ENCODE measurements at regions of chr10 and their contacts with region 1.

Region 1: GRCh38 chr10:32346134-32346550 is 816 bp downstream of the EPC1 start:
- DNase-seq: peak; percentile 91 to 98 (median 94)
- ATAC-seq: peak; percentile 81
- H3K4me3 ChIP-seq: peak overlapping the region; percentile 82 to 90
- H3K4me3 Mint-ChIP-seq: peak overlapping the region; percentile 97
- H3K27ac ChIP-seq: peak overlapping the region; percentile 98
- H3K27ac Mint-ChIP-seq: peak overlapping the region; percentile 100
- H3K4me1 ChIP-seq: peaks cover 47% of the 10 kb centered on the region
- H3K4me1 Mint-ChIP-seq: peaks cover 69% of the 10 kb centered on the region
- H3K27me3 ChIP-seq: no peaks in the 10 kb centered on the region
- H3K27me3 Mint-ChIP-seq: no peaks in the 10 kb centered on the region
- CTCF ChIP-seq: peak; percentile 83

Region 2: DNA sequence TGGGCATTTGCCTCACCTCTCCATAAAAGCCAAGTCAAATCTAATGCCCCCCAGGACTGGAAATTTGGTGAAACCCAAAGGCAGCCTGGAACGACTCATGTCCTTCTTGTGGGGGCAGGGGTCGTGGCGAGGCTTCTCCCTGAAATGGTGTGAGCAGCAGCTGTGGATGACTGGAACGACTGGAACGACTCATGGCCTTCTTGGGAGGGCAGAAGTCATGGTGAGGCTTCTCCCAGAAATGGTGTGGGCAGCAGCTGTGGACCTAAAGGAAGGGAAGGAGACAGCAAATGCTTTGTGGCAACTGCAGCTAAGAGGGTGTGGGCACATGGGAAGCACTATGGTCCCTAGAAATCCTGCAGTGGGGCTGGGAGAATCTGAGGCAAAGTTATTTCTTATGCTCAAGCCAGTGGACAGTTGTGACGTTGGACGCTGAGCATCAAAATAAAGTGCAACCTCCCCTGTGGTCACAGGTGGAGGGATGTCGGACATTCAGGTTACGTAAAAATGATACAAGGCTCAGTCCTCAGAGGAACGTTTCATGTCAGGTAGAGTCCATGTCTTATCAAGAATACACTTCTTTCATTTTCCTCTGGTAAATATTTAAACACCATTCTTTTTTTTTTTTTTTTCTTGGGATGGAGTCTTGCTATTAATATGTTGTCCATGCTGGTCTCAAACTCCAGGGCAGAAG is 182.9 kb before region 1 on chr10:
- CTCF ChIA-PET with region 1: no interaction called
- POLR2A ChIA-PET with region 1: no interaction called
- intact Hi-C with region 1: no loop called
- DNase-seq: no peak
- ATAC-seq: no peak
- H3K4me3 ChIP-seq: no peak overlapping the region
- H3K4me3 Mint-ChIP-seq: no peak overlapping the region
- H3K27ac ChIP-seq: no peak overlapping the region
- H3K27ac Mint-ChIP-seq: no peak overlapping the region
- H3K4me1 ChIP-seq: no peaks in the 10 kb centered on the region
- H3K4me1 Mint-ChIP-seq: no peaks in the 10 kb centered on the region
- H3K27me3 ChIP-seq: no peaks in the 10 kb centered on the region
- H3K27me3 Mint-ChIP-seq: peaks cover 2% of the 10 kb centered on the region
- CTCF ChIP-seq: no peak

Region 3: DNA sequence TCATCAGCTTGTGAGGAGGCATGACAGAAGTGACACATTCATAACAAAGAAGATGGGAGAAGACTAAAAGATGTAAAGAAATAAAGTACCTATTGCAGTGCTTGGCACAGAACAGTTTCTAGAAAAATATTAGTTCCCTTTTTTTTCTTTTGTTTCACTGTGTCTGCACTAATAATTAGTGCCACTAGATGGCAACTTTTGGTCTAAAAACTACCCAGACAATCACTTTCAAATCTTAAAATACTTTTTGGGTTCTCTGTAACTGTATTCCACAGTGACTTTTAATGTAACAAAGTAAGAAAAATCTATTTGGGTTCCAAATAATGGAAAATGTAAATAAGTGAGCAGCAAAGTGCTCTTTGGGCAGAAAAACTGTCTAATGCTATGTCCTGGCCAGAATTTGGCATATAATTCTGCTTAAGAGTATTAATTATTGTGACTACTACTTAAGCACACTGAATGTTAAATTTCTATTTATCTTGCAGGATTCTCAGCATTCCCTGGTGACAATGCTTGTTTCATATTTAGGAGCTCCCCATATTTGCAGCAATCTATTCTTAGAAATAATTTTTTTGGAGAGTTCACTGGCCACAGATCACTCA is 155.2 kb before region 1 on chr10:
- CTCF ChIA-PET with region 1: interaction called, 6 read pairs
- POLR2A ChIA-PET with region 1: interaction called, 3 read pairs
- intact Hi-C with region 1: loop called (anchors 1 to 5 kb)
- DNase-seq: peak in 2 of 9 experiments; percentile 52 to 65
- ATAC-seq: peak; percentile 51
- H3K4me3 ChIP-seq: no peak overlapping the region
- H3K4me3 Mint-ChIP-seq: no peak overlapping the region
- H3K27ac ChIP-seq: no peak overlapping the region
- H3K27ac Mint-ChIP-seq: no peak overlapping the region
- H3K4me1 ChIP-seq: no peaks in the 10 kb centered on the region
- H3K4me1 Mint-ChIP-seq: peaks cover 2% of the 10 kb centered on the region
- H3K27me3 ChIP-seq: no peaks in the 10 kb centered on the region
- H3K27me3 Mint-ChIP-seq: no peaks in the 10 kb centered on the region
- CTCF ChIP-seq: peak; percentile 92

Region 4: GRCh38 chr10:32298054-32298812 is 47.9 kb before region 1 on chr10:
- CTCF ChIA-PET with region 1: interaction called, 9 read pairs
- POLR2A ChIA-PET with region 1: interaction called, 8 read pairs
- intact Hi-C with region 1: loop called (anchors 5 to 10 kb)
- DNase-seq: no peak
- ATAC-seq: no peak
- H3K4me3 ChIP-seq: no peak overlapping the region
- H3K4me3 Mint-ChIP-seq: peak overlapping the region; percentile 43
- H3K27ac ChIP-seq: no peak overlapping the region
- H3K27ac Mint-ChIP-seq: peak overlapping the region; percentile 70
- H3K4me1 ChIP-seq: peaks cover 41% of the 10 kb centered on the region
- H3K4me1 Mint-ChIP-seq: peaks cover 73% of the 10 kb centered on the region
- H3K27me3 ChIP-seq: no peaks in the 10 kb centered on the region
- H3K27me3 Mint-ChIP-seq: no peaks in the 10 kb centered on the region
- CTCF ChIP-seq: no peak

Region 5: GRCh38 chr10:32367793-32368453 is 21.8 kb after region 1 on chr10:
- CTCF ChIA-PET with region 1: interaction called, 14 read pairs
- POLR2A ChIA-PET with region 1: interaction called, 7 read pairs
- intact Hi-C with region 1: loop called (anchors 1 kb)
- DNase-seq: peak; percentile 49 to 87 (median 78)
- ATAC-seq: peak; percentile 73
- H3K4me3 ChIP-seq: no peak overlapping the region
- H3K4me3 Mint-ChIP-seq: peak overlapping the region; percentile 23
- H3K27ac ChIP-seq: no peak overlapping the region
- H3K27ac Mint-ChIP-seq: peak overlapping the region; percentile 78
- H3K4me1 ChIP-seq: peaks cover 38% of the 10 kb centered on the region
- H3K4me1 Mint-ChIP-seq: peaks cover 65% of the 10 kb centered on the region
- H3K27me3 ChIP-seq: no peaks in the 10 kb centered on the region
- H3K27me3 Mint-ChIP-seq: no peaks in the 10 kb centered on the region
- CTCF ChIP-seq: peak; percentile 86

Region 6: DNA sequence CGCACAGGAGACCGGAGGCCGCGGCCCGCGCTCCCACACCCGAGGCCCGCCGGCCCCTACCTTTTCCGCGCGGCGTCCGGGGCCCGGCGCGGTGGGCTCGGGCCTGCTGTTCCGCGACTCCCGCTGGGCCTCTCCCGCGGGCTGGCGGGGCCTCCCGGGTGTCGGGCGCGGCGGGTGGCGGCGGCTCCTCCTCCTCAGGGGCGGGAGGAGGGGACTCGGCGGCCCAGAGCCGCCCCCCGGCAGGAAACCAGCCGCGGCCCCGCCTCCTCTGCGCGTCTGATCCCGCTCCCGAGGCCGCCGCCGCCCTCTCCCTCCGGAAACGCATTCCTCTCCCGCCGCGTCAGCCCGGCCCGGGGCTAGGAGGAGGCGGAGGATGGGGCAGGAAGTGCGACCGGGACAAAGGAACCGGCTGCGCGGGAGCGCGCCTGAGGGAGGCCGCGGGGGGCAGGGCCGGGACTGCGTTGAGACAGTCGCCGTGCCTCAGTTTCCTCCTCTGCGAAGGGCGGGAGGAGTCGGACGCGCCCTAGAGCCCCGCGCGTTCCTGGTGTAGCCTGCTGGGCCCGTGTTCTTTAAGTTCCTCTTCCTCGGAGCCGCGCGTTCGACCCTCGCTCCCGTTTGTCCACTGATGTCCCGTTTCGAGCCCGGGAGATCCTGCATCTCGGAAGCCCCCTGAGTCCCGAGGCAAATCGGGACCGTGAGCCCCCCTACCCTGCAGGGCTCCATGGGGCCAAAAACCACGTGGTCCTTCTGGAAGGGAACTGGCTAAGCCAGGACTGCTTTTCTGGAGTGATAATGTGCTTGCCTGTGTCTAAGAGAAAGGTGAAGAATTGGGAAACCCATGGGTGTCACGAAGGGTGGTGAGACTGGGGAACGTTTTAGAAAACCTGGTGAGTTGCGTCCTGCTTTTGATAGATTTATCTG is 612.2 kb after region 1 on chr10 and contains the start of gene ITGB1:
- CTCF ChIA-PET with region 1: no interaction called
- POLR2A ChIA-PET with region 1: no interaction called
- intact Hi-C with region 1: loop called in 1 of 2 experiments (anchors 10 kb)
- DNase-seq: peak; percentile 65 to 91 (median 82)
- ATAC-seq: peak; percentile 93
- H3K4me3 ChIP-seq: peak within 1 kb of the TSS; percentile 82 to 91
- H3K4me3 Mint-ChIP-seq: peak within 1 kb of the TSS; percentile 87
- H3K27ac ChIP-seq: peak within 1 kb of the TSS; percentile 49 to 77
- H3K27ac Mint-ChIP-seq: peak within 1 kb of the TSS; percentile 74
- H3K4me1 ChIP-seq: peaks cover 27% of the 10 kb centered on the region
- H3K4me1 Mint-ChIP-seq: peaks cover 54% of the 10 kb centered on the region
- H3K27me3 ChIP-seq: no peaks in the 10 kb centered on the region
- H3K27me3 Mint-ChIP-seq: no peaks in the 10 kb centered on the region
- CTCF ChIP-seq: no peak
- total RNA-seq, gene ITGB1: 34.2 to 34.5 TPM